ENCODE measurements at regions of chr16 and their contacts with region 1.

Region 1: GRCh38 chr16:667780-668518 is at the start of gene RHOT2:
- DNase-seq: peak; percentile 74 to 96 (median 86)
- ATAC-seq: peak; percentile 89 to 97 (median 96)
- H3K4me3 ChIP-seq: peak within 1 kb of the TSS; percentile 66 to 75
- H3K4me3 Mint-ChIP-seq: peak within 1 kb of the TSS; percentile 73 to 74 (median 73)
- H3K27ac ChIP-seq: peak within 1 kb of the TSS; percentile 74
- H3K27ac Mint-ChIP-seq: peak within 1 kb of the TSS; percentile 86 to 94
- H3K4me1 ChIP-seq: peaks cover 3 to 25% of the 10 kb centered on the region in 2 experiments
- H3K4me1 Mint-ChIP-seq: peaks cover 0 to 12% (median 11%) of the 10 kb centered on the region in 3 donors
- H3K27me3 ChIP-seq: no peaks in the 10 kb centered on the region
- H3K27me3 Mint-ChIP-seq: no peaks in the 10 kb centered on the region
- total RNA-seq, gene RHOT2: 181 to 320 (median 286) TPM

Region 2: DNA sequence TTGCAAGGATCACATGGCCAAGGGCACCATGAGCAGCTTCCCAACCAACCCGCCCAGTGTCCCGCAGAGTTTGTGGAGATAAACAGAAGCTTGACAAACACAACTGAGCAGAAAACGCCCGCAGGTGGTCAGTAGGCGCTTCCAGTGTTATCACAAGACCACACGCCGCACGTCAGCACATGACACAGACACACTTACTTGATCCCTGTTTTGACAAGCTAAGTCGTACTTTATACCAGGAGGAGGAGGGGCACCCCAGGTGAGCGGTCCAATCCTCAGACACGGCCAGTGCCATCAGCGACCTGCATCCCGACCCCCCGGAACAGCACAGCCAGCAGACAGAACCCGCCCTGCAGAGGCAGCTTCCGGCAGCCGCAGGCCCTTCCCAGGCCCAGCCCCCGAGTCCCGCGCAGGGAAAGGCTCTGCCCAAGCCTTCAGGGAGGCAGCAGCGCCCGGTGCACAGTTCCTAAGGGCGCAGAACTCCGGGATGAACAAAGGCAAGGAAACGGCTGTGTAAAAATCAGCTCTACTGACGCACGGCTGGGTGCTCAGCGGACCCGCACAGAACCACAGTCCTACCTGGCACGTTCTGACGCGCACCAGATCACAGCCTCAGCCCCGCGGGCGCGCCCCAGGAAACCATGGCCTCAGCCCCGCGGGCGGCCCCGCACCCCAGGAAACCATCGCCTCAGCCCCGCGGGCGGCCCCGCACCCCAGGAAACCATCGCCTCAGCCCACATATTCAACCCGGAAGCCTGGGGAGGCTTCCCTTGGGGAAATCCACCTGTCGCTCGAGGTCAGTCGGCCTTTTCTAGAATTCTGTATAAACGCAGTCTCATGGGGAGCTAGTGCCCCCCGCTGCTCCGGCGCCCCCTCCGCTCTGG is 343.3 kb before region 1 on chr16:
- CTCF ChIA-PET with region 1: no interaction called
- POLR2A ChIA-PET with region 1: no interaction called
- DNase-seq: peak; percentile 46 to 90 (median 84)
- ATAC-seq: peak; percentile 84 to 89 (median 84)
- H3K4me3 ChIP-seq: peak overlapping the region; percentile 53 to 60
- H3K4me3 Mint-ChIP-seq: peak overlapping the region; percentile 67 to 80 (median 70)
- H3K27ac ChIP-seq: peak overlapping the region; percentile 84
- H3K27ac Mint-ChIP-seq: peak overlapping the region; percentile 80 to 91
- H3K4me1 ChIP-seq: peaks cover 23 to 81% of the 10 kb centered on the region in 2 experiments
- H3K4me1 Mint-ChIP-seq: peaks cover 64 to 75% (median 68%) of the 10 kb centered on the region in 3 donors
- H3K27me3 ChIP-seq: no peaks in the 10 kb centered on the region
- H3K27me3 Mint-ChIP-seq: no peaks in the 10 kb centered on the region

Region 3: DNA sequence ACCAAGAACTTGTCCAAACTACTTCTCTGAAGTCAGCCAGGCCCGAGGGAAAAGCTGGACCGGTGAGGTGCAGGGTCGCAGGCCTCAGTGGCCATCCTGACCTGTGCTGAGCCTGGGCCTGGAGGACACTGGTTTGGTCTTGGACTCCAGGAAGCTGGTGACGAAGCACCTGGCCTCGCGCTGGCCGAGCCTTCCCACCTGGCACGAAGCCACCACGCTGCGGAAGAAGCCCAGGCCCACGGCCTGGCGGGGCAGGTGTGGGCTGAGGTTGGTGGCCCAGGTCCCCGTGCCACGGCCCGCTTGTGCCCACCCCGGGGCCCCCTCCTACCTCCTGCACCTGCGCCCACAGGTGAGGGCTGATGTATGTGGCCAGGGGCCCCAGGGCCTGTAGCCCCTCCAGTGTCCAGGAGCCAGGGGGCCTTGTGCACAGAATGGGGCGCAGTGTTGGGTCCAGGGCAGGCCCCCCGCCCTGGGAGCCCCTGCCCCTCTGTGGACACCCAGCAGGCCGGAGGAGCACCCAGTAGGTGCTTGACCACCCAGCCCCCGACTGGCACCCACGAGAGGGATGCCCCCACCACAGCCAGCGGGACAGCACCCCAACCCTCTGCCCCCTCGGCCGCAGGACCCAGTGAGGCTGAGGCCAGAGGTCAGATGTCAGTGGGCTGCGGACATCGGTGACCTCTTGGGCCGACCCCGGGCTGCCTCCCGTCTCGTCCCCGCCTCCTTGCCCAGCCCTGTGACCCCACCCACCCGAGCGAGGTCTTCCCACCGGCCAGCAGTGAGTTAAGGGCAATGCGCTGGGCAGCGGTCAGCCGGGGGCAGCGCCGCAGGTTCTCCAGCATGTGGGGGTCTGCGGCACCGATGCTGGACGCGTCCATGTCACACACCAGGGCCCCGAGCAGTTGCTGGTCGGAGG is 106.4 kb after region 1 on chr16:
- CTCF ChIA-PET with region 1: no interaction called
- POLR2A ChIA-PET with region 1: interaction called in 1 of 2 experiments, 11 read pairs
- DNase-seq: no peak
- ATAC-seq: no peak
- H3K4me3 ChIP-seq: no peak overlapping the region
- H3K4me3 Mint-ChIP-seq: no peak overlapping the region
- H3K27ac ChIP-seq: no peak overlapping the region
- H3K27ac Mint-ChIP-seq: no peak overlapping the region
- H3K4me1 ChIP-seq: no peaks in the 10 kb centered on the region
- H3K4me1 Mint-ChIP-seq: no peaks in the 10 kb centered on the region
- H3K27me3 ChIP-seq: peaks cover 0 to 46% of the 10 kb centered on the region in 2 experiments
- H3K27me3 Mint-ChIP-seq: peaks cover 3 to 11% of the 10 kb centered on the region in 2 donors